IMR-90 (cell line): ENCODE measurements at regions of chr15 and their contacts with region 1.

Region 1: DNA sequence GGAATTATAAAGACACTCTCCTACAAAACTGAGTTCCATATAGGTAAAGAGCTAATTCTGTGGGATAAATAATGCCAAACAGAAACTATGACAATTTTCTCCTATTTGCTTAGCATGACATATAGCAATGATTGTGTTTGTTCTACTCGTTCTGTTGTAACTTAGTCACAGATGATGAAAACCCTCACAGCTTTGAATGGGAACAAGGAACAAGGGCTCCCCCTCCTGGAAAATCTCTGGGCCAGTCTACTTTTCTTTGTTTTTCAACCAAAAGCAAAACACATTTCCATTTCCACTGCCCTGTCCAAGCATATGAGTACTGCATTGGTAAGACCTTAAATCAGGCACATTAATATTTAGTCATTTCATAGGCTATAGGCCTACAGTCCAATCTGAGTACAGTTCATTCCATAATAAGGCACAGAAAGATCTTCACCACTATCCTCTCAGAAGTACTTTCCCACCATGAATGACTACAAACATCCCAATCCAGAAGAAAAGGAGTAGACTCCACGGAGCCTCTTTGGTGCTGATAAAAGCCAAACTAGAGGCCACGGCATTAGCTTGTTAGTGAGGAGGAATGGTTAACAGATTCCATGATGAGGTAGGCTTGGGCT is 67.1 kb downstream of the ATP8B4 start:
- DNase-seq: peak; percentile 91
- ATAC-seq: peak; percentile 61
- H3K4me3 ChIP-seq: no peak overlapping the region
- H3K27ac ChIP-seq: peak overlapping the region; percentile 73
- H3K4me1 ChIP-seq: peaks cover 24% of the 10 kb centered on the region
- H3K27me3 ChIP-seq: no peaks in the 10 kb centered on the region
- CTCF ChIP-seq: peak; percentile 94
- POLR2A ChIP-seq: no peak; the same call in 1 of the 2 replicates
- RAD21 ChIP-seq: peak; percentile 95

Region 2: DNA sequence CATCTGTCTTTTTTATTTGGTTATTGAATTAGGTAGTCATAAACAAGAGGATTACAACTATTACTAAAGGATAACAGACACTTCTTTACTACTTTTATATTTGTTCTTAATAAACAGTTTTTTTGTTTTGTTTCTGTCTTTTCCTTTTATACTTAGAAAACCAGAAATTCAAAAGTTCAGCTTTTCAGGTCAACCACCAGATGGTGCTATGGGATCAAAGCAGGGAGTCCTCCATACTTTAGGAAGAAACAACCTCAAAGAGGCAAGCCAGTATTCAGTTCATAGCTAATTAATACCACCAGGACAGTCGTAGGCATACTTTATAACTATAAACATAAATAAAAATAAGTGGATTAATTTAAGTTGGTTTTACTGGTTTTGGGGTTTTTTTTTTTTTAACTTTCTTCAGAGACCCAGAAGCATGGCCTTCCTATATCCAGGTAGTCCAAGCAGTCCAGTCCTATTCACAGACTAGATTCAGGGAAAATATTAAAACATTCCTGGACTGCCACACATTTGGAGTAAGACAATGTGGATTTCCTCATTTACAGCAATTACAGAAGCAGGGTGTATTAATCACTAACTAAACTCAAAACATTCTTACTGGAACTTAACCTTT is 1190.0 kb before region 1 on chr15:
- CTCF ChIA-PET with region 1: interaction called, 3 read pairs
- POLR2A ChIA-PET with region 1: no interaction called
- dilution Hi-C with region 1: no loop called
- in situ Hi-C with region 1: no loop called
- intact Hi-C with region 1: loop called (anchors 5 kb)
- DNase-seq: peak; percentile 82
- ATAC-seq: peak; percentile 28; the same call in 1 of the 2 replicates
- H3K4me3 ChIP-seq: no peak overlapping the region
- H3K27ac ChIP-seq: no peak overlapping the region
- H3K4me1 ChIP-seq: peaks cover 24% of the 10 kb centered on the region
- H3K27me3 ChIP-seq: no peaks in the 10 kb centered on the region
- CTCF ChIP-seq: peak; percentile 96
- POLR2A ChIP-seq: no peak
- RAD21 ChIP-seq: peak; percentile 99

Region 3: GRCh38 chr15:49235446-49236124 is 816.3 kb before region 1 on chr15:
- CTCF ChIA-PET with region 1: interaction called, 10 read pairs
- POLR2A ChIA-PET with region 1: no interaction called
- dilution Hi-C with region 1: no loop called
- in situ Hi-C with region 1: loop called (anchors 5 kb)
- intact Hi-C with region 1: loop called (anchors 1 kb)
- DNase-seq: peak; percentile 92
- ATAC-seq: peak; percentile 88
- H3K4me3 ChIP-seq: no peak overlapping the region
- H3K27ac ChIP-seq: peak overlapping the region; percentile 70; the same call in 1 of the 2 replicates
- H3K4me1 ChIP-seq: peaks cover 3% of the 10 kb centered on the region
- H3K27me3 ChIP-seq: no peaks in the 10 kb centered on the region
- CTCF ChIP-seq: peak; percentile 91
- POLR2A ChIP-seq: no peak
- RAD21 ChIP-seq: peak; percentile 94

Region 4: DNA sequence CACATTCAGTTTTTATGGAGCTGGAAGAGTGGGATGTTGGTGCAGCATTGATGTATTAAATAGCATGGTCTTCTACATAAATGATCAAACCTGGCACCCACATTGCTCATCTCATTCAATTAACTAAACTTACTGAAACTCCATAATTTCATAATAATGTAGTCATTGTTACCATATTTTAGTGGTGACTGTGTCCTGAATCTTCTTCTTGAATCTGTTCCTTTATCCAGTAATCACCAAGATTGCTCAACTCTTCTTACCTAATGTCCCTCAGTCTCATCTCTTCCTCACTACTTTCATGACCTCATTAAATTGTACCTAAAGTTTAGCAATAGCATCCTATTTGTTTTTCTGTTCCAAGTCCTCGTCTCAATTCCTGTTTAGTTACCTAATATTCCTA is 559.1 kb before region 1 on chr15:
- CTCF ChIA-PET with region 1: no interaction called
- POLR2A ChIA-PET with region 1: no interaction called
- dilution Hi-C with region 1: no loop called
- in situ Hi-C with region 1: no loop called
- intact Hi-C with region 1: loop called (anchors 2 kb)
- DNase-seq: peak; percentile 90
- ATAC-seq: no peak
- H3K4me3 ChIP-seq: no peak overlapping the region
- H3K27ac ChIP-seq: no peak overlapping the region
- H3K4me1 ChIP-seq: peaks cover 14% of the 10 kb centered on the region
- H3K27me3 ChIP-seq: no peaks in the 10 kb centered on the region
- CTCF ChIP-seq: no peak
- POLR2A ChIP-seq: no peak
- RAD21 ChIP-seq: no peak

Region 5: GRCh38 chr15:49855917-49856637 is 195.8 kb before region 1 on chr15:
- CTCF ChIA-PET with region 1: no interaction called
- POLR2A ChIA-PET with region 1: no interaction called
- dilution Hi-C with region 1: no loop called
- in situ Hi-C with region 1: no loop called
- intact Hi-C with region 1: loop called (anchors 5 kb)
- DNase-seq: peak; percentile 99
- ATAC-seq: peak; percentile 74
- H3K4me3 ChIP-seq: no peak overlapping the region
- H3K27ac ChIP-seq: peak overlapping the region; percentile 100; the same call in 1 of the 2 replicates
- H3K4me1 ChIP-seq: peaks cover 24% of the 10 kb centered on the region
- H3K27me3 ChIP-seq: no peaks in the 10 kb centered on the region
- CTCF ChIP-seq: no peak
- POLR2A ChIP-seq: no peak
- RAD21 ChIP-seq: peak; percentile 17; the same call in 1 of the 2 replicates

Region 6: GRCh38 chr15:50134520-50135024 is 82.7 kb after region 1 on chr15:
- CTCF ChIA-PET with region 1: no interaction called
- POLR2A ChIA-PET with region 1: interaction called, 4 read pairs
- dilution Hi-C with region 1: no loop called
- in situ Hi-C with region 1: no loop called
- intact Hi-C with region 1: loop called (anchors 1 kb)
- DNase-seq: peak; percentile 89
- ATAC-seq: peak; percentile 44
- H3K4me3 ChIP-seq: no peak overlapping the region
- H3K27ac ChIP-seq: peak overlapping the region; percentile 60
- H3K4me1 ChIP-seq: peaks cover 17% of the 10 kb centered on the region
- H3K27me3 ChIP-seq: no peaks in the 10 kb centered on the region
- CTCF ChIP-seq: no peak
- POLR2A ChIP-seq: no peak
- RAD21 ChIP-seq: no peak